Endothelial cell of umbilical vein (primary cell): ENCODE measurements at regions of chr17 and their contacts with region 1.

Region 1: DNA sequence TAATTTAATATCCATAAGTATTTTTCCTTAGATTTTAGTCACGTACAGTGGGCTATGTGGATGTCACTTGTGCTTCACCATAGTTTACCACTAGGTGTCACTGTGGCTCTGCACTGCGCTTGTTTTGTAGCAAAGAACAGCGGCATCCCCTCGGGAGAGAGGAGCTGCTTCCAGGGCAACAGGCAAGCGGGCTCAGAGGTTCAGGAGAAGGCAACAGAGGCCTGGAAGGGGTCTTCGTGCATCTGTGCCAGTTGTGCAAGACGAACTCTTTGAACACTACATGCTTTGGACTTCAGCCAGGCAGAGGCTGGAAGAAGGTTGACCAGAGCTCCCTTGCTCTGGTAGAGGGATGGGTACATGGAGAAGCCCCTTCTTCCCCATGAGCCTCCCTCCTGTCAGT is 20.6 kb downstream of the CYB561 start:
- DNase-seq: peak; percentile 87
- H3K4me3 ChIP-seq: no peak overlapping the region
- H3K27ac ChIP-seq: no peak overlapping the region
- H3K4me1 ChIP-seq: peaks cover 30% of the 10 kb centered on the region
- H3K27me3 ChIP-seq: no peaks in the 10 kb centered on the region
- CTCF ChIP-seq: peak; percentile 76 to 79
- POLR2A ChIP-seq: no peak

Region 2: DNA sequence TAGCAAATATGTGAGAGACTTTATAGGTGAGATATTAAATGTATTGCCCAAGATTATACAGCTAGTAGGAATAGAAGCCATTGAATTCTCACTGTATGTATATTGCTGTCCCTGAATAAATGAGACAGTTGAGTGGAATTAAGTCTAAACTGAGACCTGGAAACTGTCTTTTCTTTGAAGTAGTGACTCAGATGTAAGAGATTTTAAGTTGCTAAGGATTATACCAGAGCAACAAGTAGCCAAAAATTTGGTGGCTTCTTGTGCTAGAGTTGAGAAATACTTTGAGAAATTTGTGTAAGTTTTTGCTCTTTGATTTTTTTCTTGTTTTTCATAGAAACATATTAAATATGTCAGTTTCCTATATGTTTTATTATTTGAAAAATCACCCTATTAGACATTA is 400.8 kb before region 1 on chr17:
- CTCF ChIA-PET with region 1: no interaction called
- POLR2A ChIA-PET with region 1: no interaction called
- dilution Hi-C with region 1: no loop called
- intact Hi-C with region 1: no loop called
- DNase-seq: no peak
- H3K4me3 ChIP-seq: no peak overlapping the region
- H3K27ac ChIP-seq: no peak overlapping the region
- H3K4me1 ChIP-seq: peaks cover 2% of the 10 kb centered on the region
- H3K27me3 ChIP-seq: no peaks in the 10 kb centered on the region
- CTCF ChIP-seq: no peak
- POLR2A ChIP-seq: no peak

Region 3: GRCh38 chr17:63082273-63082993 is 343.0 kb before region 1 on chr17:
- CTCF ChIA-PET with region 1: interaction called, 11 read pairs
- POLR2A ChIA-PET with region 1: no interaction called
- dilution Hi-C with region 1: no loop called
- intact Hi-C with region 1: no loop called
- DNase-seq: peak; percentile 58
- H3K4me3 ChIP-seq: no peak overlapping the region
- H3K27ac ChIP-seq: no peak overlapping the region
- H3K4me1 ChIP-seq: no peaks in the 10 kb centered on the region
- H3K27me3 ChIP-seq: no peaks in the 10 kb centered on the region
- CTCF ChIP-seq: peak; percentile 9 to 30
- POLR2A ChIP-seq: no peak

Region 4: GRCh38 chr17:63395075-63395805 is 30.2 kb before region 1 on chr17:
- CTCF ChIA-PET with region 1: no interaction called
- POLR2A ChIA-PET with region 1: no interaction called
- dilution Hi-C with region 1: no loop called
- intact Hi-C with region 1: no loop called
- DNase-seq: no peak
- H3K4me3 ChIP-seq: no peak overlapping the region
- H3K27ac ChIP-seq: no peak overlapping the region
- H3K4me1 ChIP-seq: peaks cover 17% of the 10 kb centered on the region
- H3K27me3 ChIP-seq: no peaks in the 10 kb centered on the region
- CTCF ChIP-seq: no peak
- POLR2A ChIP-seq: no peak

Region 5: GRCh38 chr17:63455417-63455816 is 29.9 kb after region 1 on chr17:
- CTCF ChIA-PET with region 1: interaction called, 21 read pairs
- POLR2A ChIA-PET with region 1: no interaction called
- dilution Hi-C with region 1: no loop called
- intact Hi-C with region 1: loop called (anchors 1 kb)
- DNase-seq: peak; percentile 76
- H3K4me3 ChIP-seq: no peak overlapping the region
- H3K27ac ChIP-seq: no peak overlapping the region
- H3K4me1 ChIP-seq: peaks cover 19% of the 10 kb centered on the region
- H3K27me3 ChIP-seq: no peaks in the 10 kb centered on the region
- CTCF ChIP-seq: no peak
- POLR2A ChIP-seq: no peak

Region 6: DNA sequence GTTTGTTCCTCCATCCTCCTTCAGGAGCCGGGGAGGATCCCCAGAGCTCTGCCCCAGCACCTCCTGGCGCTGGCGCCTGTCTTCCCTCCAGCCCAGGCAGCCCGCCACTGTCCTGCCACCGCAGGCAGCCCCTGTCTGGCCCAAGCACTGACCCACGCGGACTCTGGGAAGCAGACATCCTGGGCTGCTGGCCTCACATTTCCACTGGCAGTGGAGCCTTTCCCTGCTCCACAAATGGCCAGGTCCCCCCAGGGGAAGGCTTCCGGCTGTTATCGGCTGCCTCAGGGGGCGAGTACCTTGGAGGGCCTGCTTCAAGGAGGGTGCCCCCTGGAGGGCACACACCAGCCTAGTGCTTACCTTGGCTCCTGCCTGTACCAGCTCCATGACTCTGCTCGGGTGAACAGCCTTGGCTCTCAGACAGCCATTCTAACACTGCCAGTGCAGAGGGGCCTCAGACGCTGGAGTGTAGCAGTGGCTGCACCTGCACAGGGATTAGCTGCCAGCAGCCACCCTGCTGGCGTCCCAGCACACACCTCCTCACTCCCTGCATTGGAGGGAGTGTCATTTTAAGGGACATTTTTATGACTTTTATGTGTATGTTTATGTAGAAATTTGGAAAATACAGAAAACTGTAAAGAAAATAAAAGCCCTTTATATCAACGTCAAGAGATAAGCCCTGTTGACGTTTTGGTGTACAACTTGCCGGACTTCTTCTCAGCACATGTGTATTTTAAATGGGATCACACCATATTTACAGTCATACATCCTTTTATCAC is 72.4 kb after region 1 on chr17:
- CTCF ChIA-PET with region 1: interaction called, 21 read pairs
- POLR2A ChIA-PET with region 1: no interaction called
- dilution Hi-C with region 1: no loop called
- intact Hi-C with region 1: loop called (anchors 5 kb)
- DNase-seq: no peak
- H3K4me3 ChIP-seq: no peak overlapping the region
- H3K27ac ChIP-seq: no peak overlapping the region
- H3K4me1 ChIP-seq: no peaks in the 10 kb centered on the region
- H3K27me3 ChIP-seq: peaks cover 2 to 3% of the 10 kb centered on the region in 2 experiments
- CTCF ChIP-seq: peak; percentile 5 to 44
- POLR2A ChIP-seq: no peak

Region 7: GRCh38 chr17:63600569-63601438 is 175.3 kb after region 1 on chr17 and contains the start of gene TACO1:
- CTCF ChIA-PET with region 1: interaction called, 239 read pairs
- POLR2A ChIA-PET with region 1: no interaction called
- dilution Hi-C with region 1: no loop called
- intact Hi-C with region 1: loop called (anchors 1 kb)
- DNase-seq: peak; percentile 77
- H3K4me3 ChIP-seq: peak within 1 kb of the TSS; percentile 73 to 97 (median 81)
- H3K27ac ChIP-seq: peak within 1 kb of the TSS; percentile 33
- H3K4me1 ChIP-seq: peaks cover 25% of the 10 kb centered on the region
- H3K27me3 ChIP-seq: no peaks in the 10 kb centered on the region
- CTCF ChIP-seq: no peak
- POLR2A ChIP-seq: peak; percentile 74
- total RNA-seq, gene TACO1: 26.1 and 31.7 TPM in 2 replicates

Region 8: DNA sequence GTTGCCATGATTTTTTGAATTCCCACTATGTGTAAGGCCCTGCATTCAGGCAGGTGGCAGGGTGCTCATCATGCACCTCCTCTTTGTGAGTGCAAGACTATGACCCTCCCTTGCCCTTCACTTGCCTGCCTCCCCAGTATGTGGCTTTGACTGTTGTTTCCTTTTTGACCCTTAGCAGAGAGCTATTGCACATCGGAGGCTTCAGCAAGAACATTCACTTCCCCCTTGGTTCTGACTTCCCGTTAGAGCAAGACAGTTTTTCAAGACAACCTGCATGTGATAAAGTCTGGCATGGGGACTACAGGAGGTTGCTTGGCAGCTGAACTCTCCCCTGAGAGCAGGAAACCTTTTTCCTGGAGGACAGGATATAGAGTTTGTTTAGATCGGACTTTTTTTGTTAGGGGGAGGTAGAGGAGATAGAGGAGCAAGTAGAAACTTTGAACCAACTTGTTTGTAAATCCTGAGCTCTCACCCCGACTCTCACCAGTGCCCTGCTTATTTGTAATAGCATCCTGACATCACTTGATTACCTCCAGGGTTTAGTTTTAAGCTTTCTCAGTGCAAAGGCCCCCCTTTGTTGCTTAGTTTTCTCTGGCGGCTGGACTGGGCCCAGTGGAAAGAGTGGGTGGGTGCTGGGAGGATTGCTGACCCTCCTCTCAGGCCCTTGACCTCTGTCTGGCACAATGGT is 240.2 kb after region 1 on chr17:
- CTCF ChIA-PET with region 1: interaction called, 12 read pairs
- POLR2A ChIA-PET with region 1: no interaction called
- dilution Hi-C with region 1: no loop called
- intact Hi-C with region 1: no loop called
- DNase-seq: peak; percentile 80
- H3K4me3 ChIP-seq: peak overlapping the region in 1 of 3 experiments; percentile 2
- H3K27ac ChIP-seq: peak overlapping the region; percentile 17
- H3K4me1 ChIP-seq: peaks cover 20% of the 10 kb centered on the region
- H3K27me3 ChIP-seq: no peaks in the 10 kb centered on the region
- CTCF ChIP-seq: no peak
- POLR2A ChIP-seq: no peak

Region 9: GRCh38 chr17:63709098-63709497 is 283.6 kb after region 1 on chr17:
- CTCF ChIA-PET with region 1: interaction called, 15 read pairs
- POLR2A ChIA-PET with region 1: no interaction called
- dilution Hi-C with region 1: no loop called
- intact Hi-C with region 1: no loop called
- DNase-seq: no peak
- H3K4me3 ChIP-seq: no peak overlapping the region
- H3K27ac ChIP-seq: no peak overlapping the region
- H3K4me1 ChIP-seq: peaks cover 8% of the 10 kb centered on the region
- H3K27me3 ChIP-seq: no peaks in the 10 kb centered on the region
- CTCF ChIP-seq: no peak
- POLR2A ChIP-seq: no peak